AG04449 (cell line): ENCODE measurements at regions of chr17 and their contacts with region 1.

Region 1: DNA sequence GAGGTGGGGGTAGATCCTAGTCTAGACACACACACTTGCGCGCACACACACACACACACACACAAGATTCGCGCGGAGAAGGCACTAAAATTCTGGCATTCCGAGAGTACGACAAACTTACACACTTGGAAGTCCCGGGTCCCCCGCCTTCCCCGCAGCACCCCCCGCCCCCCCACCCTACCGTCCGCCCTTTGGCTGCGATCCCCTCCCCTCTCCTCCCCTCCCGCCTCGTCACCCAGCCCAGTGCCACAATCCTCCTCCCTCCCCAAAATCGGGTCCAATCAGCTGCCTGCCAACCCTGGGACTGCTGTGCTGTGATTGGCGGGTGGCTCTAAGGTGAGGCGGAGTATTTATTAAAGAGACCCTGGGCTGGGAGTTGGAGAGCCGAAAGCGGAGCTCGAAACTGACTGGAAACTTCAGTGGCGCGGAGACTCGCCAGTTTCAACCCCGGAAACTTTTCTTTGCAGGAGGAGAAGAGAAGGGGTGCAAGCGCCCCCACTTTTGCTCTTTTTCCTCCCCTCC is at the start of gene SOX9:
- DNase-seq: peak; percentile 42
- H3K4me3 ChIP-seq: peak within 1 kb of the TSS; percentile 65
- CTCF ChIP-seq: no peak

Region 2: DNA sequence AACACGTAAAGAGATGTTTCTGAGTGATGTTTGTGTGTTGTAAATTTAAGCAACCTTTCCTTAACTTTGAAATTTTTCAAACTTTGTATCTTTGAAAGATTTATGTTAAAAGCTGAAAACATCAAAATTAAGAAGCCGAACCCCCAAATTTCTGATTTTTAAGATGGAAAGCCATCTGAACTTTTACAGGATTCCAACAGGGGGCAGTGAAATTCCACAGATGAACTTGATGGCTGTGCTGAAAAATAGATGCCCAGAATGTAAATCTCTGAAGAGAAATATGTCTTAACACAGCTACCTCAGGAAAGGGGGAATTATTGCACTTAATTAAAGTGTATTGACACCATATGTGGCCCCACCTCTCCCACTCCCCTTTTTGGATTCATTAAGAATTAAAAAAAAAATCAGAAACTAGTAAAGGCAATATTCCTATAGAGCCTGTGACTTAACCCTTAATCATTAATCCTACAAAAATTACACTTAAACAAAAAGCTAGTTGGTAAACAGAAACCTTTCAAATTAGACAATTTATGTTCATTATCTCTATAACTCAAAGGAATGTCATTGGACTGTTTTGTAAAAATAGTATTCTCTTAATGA is 1353.5 kb before region 1 on chr17:
- CTCF ChIA-PET with region 1: interaction called, 14 read pairs
- POLR2A ChIA-PET with region 1: no interaction called
- DNase-seq: no peak
- H3K4me3 ChIP-seq: no peak overlapping the region
- CTCF ChIP-seq: peak; percentile 36

Region 3: DNA sequence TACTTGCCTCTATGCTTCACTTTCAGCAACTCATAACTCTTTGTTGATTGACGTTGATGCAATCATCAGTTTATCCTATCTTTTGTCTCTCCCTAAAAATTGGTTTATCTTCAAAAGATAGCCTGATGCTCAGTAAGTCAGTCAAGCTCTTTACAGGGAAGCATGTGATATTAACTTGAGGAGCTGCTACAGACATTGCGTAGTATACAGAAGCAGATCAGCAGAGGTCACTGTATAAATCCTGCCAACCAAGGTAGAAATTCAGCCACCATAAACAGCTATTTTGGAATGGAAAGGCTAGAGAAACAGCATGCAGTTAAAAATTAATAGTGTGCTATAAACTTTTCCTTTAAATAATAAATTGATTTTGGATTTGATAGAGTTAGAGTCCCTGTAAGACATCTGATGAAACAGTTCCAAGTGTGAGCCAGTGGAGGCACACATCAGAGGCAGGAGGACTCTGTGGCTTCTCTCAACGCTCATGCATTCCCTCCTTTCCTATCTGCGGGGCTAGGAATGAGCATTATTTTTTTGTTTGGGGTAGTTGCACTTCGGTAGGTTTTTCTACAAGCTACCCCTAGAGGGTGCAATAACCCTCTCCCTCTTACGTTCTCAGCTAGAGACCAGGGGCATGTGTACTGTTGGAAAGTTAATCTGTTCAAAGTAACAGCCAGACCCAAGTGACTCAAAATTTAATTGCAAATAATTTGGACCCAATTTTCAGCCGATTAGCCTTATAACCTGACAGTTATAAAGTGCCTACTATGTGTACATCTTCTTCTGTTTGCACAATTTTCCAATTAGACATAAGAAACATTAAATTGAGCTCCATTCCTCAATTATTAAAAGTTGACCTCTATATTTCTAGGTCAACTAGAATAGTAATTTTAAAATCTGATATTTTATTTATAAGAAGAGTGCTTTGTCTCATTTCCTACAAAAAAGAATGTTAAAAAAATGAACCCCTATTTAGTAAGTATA is 647.6 kb before region 1 on chr17:
- CTCF ChIA-PET with region 1: interaction called, 11 read pairs
- POLR2A ChIA-PET with region 1: no interaction called
- DNase-seq: no peak
- H3K4me3 ChIP-seq: no peak overlapping the region
- CTCF ChIP-seq: peak; percentile 63

Region 4: DNA sequence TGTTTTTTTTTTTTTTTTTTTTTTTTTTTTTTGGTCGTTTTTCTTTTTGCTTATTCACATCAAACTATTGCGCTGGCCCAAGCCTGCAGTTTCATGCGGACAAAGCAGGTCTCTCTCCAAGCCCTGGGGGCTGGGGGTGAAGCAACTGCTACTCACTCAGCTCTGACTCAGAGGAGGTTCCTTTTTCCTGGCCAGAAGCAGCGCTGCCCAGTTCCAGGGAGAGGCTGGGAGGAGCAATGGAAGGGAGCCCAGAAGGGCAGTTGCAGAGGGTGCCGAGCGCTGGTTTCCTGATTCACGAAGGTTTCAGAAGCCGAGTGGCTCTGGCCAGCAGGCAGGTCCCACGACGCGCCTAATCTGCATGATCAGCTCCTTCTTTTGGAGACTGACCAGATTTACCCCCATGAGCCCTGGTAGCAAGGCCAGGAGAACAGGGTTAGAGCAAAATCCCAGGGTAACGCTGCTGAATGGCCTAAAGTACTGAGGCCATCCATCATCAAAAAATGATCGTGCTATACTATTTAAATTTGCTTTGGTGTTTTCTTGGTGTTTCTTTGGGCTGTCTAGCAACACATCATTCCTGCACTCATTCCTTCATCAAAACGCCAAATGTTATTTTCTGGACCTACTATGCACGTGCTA is 144.6 kb before region 1 on chr17:
- CTCF ChIA-PET with region 1: no interaction called
- POLR2A ChIA-PET with region 1: no interaction called
- DNase-seq: peak; percentile 7
- H3K4me3 ChIP-seq: no peak overlapping the region
- CTCF ChIP-seq: no peak

Region 5: GRCh38 chr17:72136693-72137092 is 16.0 kb after region 1 on chr17:
- CTCF ChIA-PET with region 1: interaction called, 13 read pairs
- POLR2A ChIA-PET with region 1: no interaction called
- DNase-seq: no peak
- H3K4me3 ChIP-seq: no peak overlapping the region
- CTCF ChIP-seq: no peak